Activated T-helper 2 cell treated with anti-CD3 and anti-CD28 coated beads, Interferon-gamma antibody, Interleukin-2, Interleukin-4, amounts not matched to agents 10 μg/mL and 5 μg/mL and 100 μg/mL, durations not matched to agents 14 hours and 24 hours and 36 hours (primary cell): ENCODE measurements at regions of chr18 and their contacts with region 1.

Region 1: GRCh38 chr18:54261894-54262293 is 7.4 kb upstream of the POLI start:
- DNase-seq: no peak
- H3K4me3 Mint-ChIP-seq: no peak overlapping the region
- H3K27ac Mint-ChIP-seq: peak overlapping the region; percentile 95
- H3K4me1 Mint-ChIP-seq: peaks cover 45% of the 10 kb centered on the region
- H3K27me3 Mint-ChIP-seq: no peaks in the 10 kb centered on the region

Region 2: DNA sequence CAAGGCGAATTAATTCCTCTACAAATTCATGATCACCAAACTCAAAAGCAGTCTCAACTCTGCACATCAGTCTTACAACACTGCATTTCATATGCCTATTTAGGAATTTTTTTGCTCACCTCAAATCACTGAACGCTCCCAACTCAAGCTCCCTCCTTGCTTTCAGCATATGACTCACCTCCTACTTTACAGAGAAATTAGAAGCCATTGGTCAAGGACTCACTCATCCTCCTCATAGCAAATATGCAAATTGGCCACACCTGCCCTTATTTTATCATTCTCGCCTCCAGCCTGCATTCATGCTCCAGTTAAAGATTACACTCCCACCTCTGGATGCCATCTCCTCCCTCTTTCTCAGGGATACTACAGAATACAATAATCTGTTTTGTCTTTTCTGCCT is 186.2 kb before region 1 on chr18:
- intact Hi-C with region 1: no loop called
- DNase-seq: no peak
- H3K4me3 Mint-ChIP-seq: no peak overlapping the region
- H3K27ac Mint-ChIP-seq: no peak overlapping the region
- H3K4me1 Mint-ChIP-seq: no peaks in the 10 kb centered on the region
- H3K27me3 Mint-ChIP-seq: peaks cover 7% of the 10 kb centered on the region

Region 3: DNA sequence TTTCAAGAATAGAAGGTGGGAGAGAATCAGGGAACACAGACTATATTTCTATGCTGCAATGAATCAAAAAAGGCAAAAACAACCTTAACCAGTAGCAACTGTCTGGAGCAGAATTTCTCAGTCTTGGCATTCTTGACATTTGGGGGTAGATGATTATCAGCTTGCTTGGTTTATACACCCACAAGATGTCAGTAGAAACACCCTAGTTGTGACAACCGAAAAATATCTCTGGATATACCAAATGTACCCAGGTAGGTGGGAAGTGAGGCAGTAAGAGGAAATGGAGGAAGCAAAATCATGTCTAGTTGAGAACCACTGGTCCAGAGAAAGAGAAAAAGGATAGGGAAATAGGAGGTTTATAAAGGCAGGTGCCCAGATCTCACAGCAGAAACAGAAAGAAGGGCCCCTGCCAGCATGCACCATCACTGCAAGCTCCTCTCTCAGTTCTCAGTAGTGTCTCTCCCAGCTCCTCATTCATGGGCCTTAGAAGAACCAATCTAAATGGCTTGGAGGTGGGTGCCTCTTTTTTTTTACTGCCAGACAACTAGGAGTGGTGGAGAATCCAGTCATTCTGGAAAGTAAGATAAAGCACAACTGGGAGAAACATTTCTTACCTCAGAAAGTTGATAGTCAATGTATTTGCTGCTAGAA is 87.8 kb before region 1 on chr18:
- intact Hi-C with region 1: loop called (anchors 1 kb)
- DNase-seq: no peak
- H3K4me3 Mint-ChIP-seq: peak overlapping the region; percentile 41
- H3K27ac Mint-ChIP-seq: peak overlapping the region; percentile 94
- H3K4me1 Mint-ChIP-seq: peaks cover 61% of the 10 kb centered on the region
- H3K27me3 Mint-ChIP-seq: no peaks in the 10 kb centered on the region

Region 4: DNA sequence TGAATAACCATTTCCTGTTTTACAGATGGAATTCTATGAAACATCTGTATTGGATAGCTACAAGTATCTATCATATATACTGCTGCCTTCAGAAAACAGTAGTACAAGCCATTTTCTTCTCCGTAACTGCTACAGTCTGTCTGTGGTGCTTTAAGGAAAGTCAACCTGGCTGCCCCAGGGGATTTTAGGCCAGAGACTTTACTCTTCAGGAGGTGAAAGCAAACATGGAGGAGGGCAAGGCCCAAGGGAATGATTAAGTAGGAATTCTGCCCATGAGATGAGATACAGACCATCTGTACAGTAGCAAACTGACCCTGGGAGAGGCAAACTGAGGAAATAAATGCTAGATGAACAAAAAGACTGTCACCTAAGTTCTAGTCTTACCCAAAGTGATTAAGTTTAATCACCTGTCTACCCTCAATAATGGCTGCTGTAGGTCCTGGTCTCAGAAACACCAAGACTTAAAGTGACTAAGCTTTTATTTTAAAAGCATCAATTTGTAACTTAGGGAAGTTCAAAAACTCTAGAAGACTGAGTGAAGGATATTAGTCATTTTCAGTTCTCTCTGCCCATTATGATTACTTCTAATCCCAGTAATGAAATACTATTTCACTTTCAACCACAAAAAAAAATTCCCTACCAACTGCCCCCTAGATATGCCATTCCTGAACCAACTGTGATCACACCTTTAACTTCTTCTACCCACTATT is 52.3 kb before region 1 on chr18:
- intact Hi-C with region 1: loop called (anchors 1 kb)
- DNase-seq: no peak
- H3K4me3 Mint-ChIP-seq: peak overlapping the region; percentile 53
- H3K27ac Mint-ChIP-seq: peak overlapping the region; percentile 84
- H3K4me1 Mint-ChIP-seq: peaks cover 59% of the 10 kb centered on the region
- H3K27me3 Mint-ChIP-seq: no peaks in the 10 kb centered on the region

Region 5: DNA sequence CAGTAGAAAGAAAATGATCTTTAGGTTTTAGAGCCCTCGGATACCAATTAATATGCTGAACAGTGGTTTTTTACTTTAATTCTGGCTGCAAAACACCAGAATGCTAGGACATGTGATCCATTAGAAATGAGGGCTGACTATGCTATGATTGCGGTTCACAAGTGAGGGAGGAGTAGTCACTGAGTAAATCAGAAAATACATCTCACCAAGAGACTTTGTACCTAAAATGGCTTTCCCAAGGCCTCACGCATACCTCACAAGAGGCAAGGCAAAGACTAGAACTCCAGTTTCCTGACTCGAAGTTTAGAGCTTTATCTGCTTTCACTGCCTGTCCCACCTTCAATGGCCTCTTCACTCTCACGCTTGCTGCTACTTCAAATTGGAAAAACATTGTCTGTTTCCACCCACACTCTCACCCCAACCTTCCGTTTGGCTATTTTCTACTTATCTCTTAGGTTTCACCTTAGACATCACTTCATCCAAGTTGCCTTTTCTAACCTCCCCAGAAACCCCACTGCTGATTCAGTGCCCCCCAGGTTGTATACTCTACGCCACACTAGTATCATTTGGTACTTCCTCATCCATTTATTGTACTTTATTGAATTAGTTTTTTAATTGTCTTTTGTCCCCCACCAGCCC is 32.4 kb before region 1 on chr18:
- intact Hi-C with region 1: loop called (anchors 1 kb)
- DNase-seq: no peak
- H3K4me3 Mint-ChIP-seq: no peak overlapping the region
- H3K27ac Mint-ChIP-seq: peak overlapping the region; percentile 71
- H3K4me1 Mint-ChIP-seq: peaks cover 20% of the 10 kb centered on the region
- H3K27me3 Mint-ChIP-seq: peaks cover 3% of the 10 kb centered on the region

Region 6: GRCh38 chr18:54351186-54351585 is 89.3 kb after region 1 on chr18:
- intact Hi-C with region 1: loop called (anchors 2 kb)
- DNase-seq: no peak
- H3K4me3 Mint-ChIP-seq: no peak overlapping the region
- H3K27ac Mint-ChIP-seq: no peak overlapping the region
- H3K4me1 Mint-ChIP-seq: peaks cover 15% of the 10 kb centered on the region
- H3K27me3 Mint-ChIP-seq: peaks cover 35% of the 10 kb centered on the region

Region 7: GRCh38 chr18:54712306-54712705 is 450.4 kb after region 1 on chr18:
- intact Hi-C with region 1: loop called (anchors 2 kb)
- DNase-seq: no peak
- H3K4me3 Mint-ChIP-seq: no peak overlapping the region
- H3K27ac Mint-ChIP-seq: no peak overlapping the region
- H3K4me1 Mint-ChIP-seq: peaks cover 48% of the 10 kb centered on the region
- H3K27me3 Mint-ChIP-seq: peaks cover 43% of the 10 kb centered on the region

Region 8: GRCh38 chr18:55251254-55251971 is 989.5 kb after region 1 on chr18:
- intact Hi-C with region 1: loop called (anchors 5 kb)
- DNase-seq: no peak
- H3K4me3 Mint-ChIP-seq: no peak overlapping the region
- H3K27ac Mint-ChIP-seq: no peak overlapping the region
- H3K4me1 Mint-ChIP-seq: peaks cover 45% of the 10 kb centered on the region
- H3K27me3 Mint-ChIP-seq: no peaks in the 10 kb centered on the region